ENCODE measurements at regions of chr6 and their contacts with region 1.

Region 1: GRCh38 chr6:143842902-143843676 is at the start of gene LTV1:
- DNase-seq: peak; percentile 97
- ATAC-seq: peak; percentile 100
- total RNA-seq, gene LTV1: 13.1 to 20.0 TPM

Region 2: DNA sequence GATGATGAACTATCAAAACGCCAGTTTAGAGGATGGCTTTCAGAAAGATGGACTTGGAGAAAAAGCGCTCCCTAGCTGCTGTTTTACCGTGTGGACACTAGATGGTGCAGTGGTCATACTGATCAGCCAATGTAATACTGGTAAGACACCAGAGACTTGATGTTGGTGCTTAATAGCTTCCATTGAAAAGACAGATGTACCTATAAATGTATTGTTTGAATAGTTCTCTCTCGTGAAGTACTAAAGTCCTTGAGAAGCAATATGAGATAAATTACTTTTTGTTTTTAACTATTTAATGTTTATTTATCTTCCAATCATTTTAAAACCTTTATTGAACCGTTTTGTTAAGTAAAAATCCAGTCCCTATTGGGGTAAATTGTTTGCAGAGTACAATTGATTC is 267.6 kb before region 1 on chr6:
- intact Hi-C with region 1: loop called in 1 of 2 experiments (anchors 10 kb)
- DNase-seq: no peak
- ATAC-seq: peak; percentile 84 to 89

Region 3: DNA sequence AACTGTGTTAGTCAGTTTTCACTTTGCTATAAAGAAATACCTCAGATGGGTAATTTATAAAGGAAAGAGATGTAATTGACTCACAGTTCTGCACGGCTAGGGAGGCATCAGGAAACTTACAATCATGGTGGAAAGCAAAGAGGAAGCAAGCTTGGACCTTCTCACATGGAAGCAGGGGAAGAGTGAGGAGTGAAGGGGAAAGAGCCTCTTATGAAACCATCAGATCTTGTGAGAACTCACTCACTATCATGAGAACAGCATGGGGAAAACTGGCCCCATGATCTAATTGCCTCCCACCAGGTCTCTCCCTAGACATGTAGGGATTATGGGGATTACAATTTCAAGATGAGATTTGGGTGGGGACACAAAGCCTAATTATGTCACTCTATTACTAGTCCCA is 206.3 kb after region 1 on chr6:
- intact Hi-C with region 1: no loop called
- DNase-seq: no peak
- ATAC-seq: no peak